HEK293 (cell line): ENCODE measurements at regions of chr2 and their contacts with region 1.

Region 1: DNA sequence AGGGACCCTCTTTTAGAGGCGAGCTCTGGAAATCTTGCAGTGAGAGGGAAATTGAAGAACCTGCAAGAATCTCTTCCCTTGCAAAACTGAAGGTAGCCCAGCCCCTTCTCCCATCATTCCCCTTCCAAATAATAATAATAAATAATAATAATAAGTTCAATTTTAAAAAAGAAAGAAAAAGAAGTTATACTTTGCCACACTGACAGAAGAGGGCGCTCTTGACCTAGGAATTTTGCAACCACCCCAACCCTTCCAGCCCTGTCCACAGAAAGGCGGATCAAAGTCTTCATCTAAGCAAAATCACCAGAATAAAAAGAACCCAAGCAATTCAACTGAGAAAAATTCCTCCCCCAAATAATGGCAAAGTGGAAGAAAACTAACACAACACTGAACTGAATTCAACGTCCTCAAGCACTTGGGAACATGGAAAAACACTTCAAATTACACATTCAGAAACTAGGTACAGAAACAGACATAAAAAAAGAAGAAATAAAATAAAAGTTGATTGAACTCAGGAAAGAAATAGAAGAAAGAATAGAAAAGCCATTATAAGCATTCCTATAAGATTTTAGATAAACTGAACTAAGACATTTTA is 98.9 kb upstream of the GLS start:
- H3K4me3 ChIP-seq: no peak overlapping the region
- H3K27ac ChIP-seq: no peak overlapping the region
- H3K4me1 ChIP-seq: peaks cover 2% of the 10 kb centered on the region; the same call in 1 of the 2 replicates
- CTCF ChIP-seq: no peak

Region 2: DNA sequence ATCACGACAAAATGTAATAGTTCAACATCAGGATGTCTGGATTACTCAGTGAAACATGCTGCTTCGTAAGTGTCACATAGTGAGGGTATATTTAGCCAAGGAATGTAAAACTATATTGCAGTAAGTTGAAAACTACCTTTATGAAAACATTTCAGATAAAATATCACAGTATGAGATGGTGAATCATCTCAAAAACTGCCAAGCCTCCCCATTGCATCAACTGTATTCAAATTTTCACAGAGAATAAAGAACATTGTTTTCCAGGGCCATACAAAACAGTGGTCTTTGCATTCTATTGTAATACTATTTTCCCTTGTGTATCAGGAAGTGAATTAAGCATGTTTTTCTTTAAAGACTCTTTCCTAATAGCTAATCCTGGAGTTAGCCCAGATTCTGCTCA is 671.6 kb before region 1 on chr2:
- CTCF ChIA-PET with region 1: no interaction called
- POLR2A ChIA-PET with region 1: no interaction called
- H3K4me3 ChIP-seq: no peak overlapping the region
- H3K27ac ChIP-seq: no peak overlapping the region
- H3K4me1 ChIP-seq: no peaks in the 10 kb centered on the region
- CTCF ChIP-seq: no peak

Region 3: DNA sequence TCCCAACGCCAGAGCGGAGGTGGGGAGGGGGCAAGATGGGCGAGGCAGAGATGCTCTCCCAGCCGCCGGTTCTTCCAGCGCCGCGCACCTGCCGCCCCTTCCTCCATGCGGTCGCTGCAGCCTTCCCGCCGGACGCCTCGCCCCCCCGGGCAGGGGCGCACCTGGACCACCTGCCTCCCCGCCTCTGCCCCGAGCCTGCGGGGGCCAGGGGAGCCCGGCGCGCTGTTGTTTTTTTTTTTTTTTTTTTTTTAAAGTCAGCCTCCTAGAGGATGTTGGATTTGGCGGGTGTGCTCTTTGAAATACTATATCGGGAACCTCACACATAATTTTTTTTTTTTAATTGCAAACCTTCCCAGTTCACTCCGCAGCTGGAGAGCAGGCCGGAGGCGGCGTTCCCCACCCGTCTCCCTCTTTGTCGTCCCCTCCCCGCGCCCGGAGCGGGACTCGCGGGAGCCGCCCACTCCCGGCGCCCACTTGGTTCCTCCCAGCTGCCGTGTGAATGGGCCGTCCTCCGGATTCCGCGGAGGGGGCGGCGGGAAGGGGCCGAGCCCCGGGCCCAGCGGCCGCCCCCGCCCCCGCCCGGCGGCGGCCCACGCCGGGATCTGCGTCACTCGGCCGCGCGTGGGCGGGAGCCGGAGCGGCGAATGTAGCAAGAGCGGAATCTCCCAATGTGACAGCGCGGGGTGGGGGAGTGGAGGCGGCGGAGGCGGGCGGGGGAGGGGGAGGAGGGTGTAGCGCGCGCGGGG is 133.2 kb before region 1 on chr2:
- CTCF ChIA-PET with region 1: no interaction called
- POLR2A ChIA-PET with region 1: no interaction called
- H3K4me3 ChIP-seq: peak overlapping the region; percentile 98
- H3K27ac ChIP-seq: peak overlapping the region; percentile 74
- H3K4me1 ChIP-seq: peaks cover 6% of the 10 kb centered on the region; the same call in 1 of the 2 replicates
- CTCF ChIP-seq: no peak; the same call in 1 of the 2 replicates

Region 4: DNA sequence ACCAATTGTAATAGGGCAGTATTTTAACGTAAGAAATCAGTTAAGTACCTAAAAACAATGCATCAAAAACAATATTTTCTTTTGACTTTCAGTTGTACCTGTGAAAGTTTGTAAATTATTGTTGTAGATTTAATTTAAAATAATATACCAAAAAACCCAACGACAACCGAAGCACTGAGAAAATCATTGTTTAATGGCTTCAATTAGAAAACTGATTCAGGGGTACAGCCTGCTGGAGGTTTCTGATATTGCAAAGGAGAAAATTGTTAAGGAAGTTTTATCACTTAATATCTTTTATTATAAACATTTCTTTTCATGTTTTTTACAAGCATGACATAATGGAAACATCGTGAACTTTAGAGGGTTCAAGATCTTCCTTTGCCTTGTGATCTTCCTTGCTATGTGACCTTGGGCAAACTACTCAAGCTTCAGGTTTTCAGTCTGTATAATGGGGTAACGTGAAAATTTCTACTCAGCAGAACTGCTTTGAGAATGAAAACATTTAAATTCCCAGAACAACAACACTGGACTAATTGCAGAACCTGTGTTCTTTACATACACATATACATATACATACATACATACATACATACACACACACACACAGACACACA is 22.6 kb after region 1 on chr2:
- CTCF ChIA-PET with region 1: interaction called, 17 read pairs
- POLR2A ChIA-PET with region 1: no interaction called
- H3K4me3 ChIP-seq: no peak overlapping the region
- H3K27ac ChIP-seq: no peak overlapping the region
- H3K4me1 ChIP-seq: no peaks in the 10 kb centered on the region
- CTCF ChIP-seq: no peak

Region 5: DNA sequence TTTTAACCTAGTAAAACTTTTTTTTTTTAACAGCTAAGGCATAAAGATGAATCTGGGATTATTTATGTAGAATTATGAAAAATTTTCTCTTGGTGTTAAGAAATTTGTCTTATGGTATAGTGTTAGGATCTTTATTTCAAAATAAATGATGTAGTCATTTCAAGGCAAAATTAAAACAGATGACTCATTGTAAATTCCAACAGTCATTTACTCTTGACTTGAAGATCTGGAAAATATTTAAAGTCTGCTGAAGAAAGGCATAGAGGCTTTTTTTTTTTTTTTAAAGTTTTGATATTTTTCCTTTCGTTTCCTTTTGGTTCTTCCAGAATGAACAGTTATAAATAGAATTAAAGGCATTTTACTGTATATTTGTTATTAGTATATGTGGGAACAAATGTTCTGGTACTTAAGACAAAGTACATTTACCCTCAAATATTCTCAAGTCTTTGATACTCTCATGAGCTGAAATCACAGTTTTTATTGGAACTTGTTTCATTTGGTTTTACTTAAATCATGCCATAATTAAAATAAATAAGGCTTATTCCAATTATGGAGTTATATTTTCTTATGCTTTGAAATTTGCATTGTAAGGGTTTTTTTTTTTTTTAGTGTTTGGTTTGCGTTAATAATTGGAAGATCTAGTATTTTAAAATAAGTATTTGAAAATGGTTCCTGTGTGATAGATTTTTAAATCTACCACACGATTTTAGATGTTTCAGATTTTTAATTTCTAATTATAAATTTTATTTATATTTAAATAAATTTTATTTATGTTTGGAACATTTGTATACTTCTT is 128.8 kb after region 1 on chr2:
- CTCF ChIA-PET with region 1: interaction called, 10 read pairs
- POLR2A ChIA-PET with region 1: no interaction called
- H3K4me3 ChIP-seq: no peak overlapping the region
- H3K27ac ChIP-seq: no peak overlapping the region
- H3K4me1 ChIP-seq: no peaks in the 10 kb centered on the region
- CTCF ChIP-seq: no peak